IMR-90 (cell line): ENCODE measurements at regions of chr14 and their contacts with region 1.

Region 1: GRCh38 chr14:77457522-77458290 is at the starts of genes AHSA1 and VIPAS39:
- DNase-seq: peak; percentile 99
- ATAC-seq: peak; percentile 97
- H3K4me3 ChIP-seq: peak within 1 kb of the TSS; percentile 69
- H3K27ac ChIP-seq: peak within 1 kb of the TSS; percentile 92
- H3K4me1 ChIP-seq: peaks cover 3% of the 10 kb centered on the region
- H3K27me3 ChIP-seq: no peaks in the 10 kb centered on the region
- CTCF ChIP-seq: no peak
- POLR2A ChIP-seq: peak; percentile 88
- RAD21 ChIP-seq: no peak
- total RNA-seq, gene AHSA1: 152 and 166 TPM in 2 replicates
- total RNA-seq, gene VIPAS39: 32.2 and 43.0 TPM in 2 replicates

Region 2: GRCh38 chr14:77151918-77152588 is 305.7 kb before region 1 on chr14:
- CTCF ChIA-PET with region 1: no interaction called
- POLR2A ChIA-PET with region 1: no interaction called
- dilution Hi-C with region 1: no loop called
- in situ Hi-C with region 1: no loop called
- intact Hi-C with region 1: loop called (anchors 10 kb)
- DNase-seq: peak; percentile 28
- ATAC-seq: peak; percentile 89
- H3K4me3 ChIP-seq: no peak overlapping the region
- H3K27ac ChIP-seq: no peak overlapping the region
- H3K4me1 ChIP-seq: no peaks in the 10 kb centered on the region
- H3K27me3 ChIP-seq: peaks cover 28% of the 10 kb centered on the region
- CTCF ChIP-seq: peak; percentile 39
- POLR2A ChIP-seq: no peak
- RAD21 ChIP-seq: peak; percentile 47

Region 3: DNA sequence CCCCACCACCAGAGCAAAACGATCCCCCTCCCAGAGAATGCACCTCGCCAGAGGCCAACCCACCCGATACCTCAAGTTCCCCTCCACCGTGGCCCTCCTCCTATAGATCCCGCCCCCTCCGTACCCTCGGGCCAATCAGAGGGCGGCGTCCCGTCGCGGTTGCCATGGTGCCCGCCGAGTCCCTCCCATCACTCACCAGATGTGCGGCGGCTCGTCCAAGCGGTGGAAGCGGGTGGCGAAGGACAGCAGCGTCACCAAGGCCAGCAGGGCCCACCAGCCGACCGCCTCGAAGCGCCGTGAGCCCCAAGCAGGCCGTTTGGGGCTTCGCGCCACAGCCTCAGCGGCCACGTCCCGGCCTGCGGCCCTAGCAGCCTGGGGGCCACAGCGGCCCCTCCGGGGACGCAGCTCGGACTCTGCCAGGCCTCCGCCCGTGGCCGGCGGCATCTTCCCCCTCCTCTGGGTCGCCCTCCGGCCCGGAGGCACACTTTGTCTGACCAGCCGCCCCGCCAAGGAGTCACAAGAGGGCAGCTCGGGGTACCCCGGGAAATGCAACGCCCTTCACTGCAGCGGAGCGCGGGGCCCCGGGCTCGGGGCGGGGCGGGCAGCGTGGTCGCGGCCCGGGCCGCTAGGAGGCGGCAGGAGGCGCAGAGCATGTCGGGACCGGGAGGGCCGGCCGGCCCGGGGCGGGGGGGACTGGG is 137.3 kb before region 1 on chr14 and contains the start of gene POMT2:
- CTCF ChIA-PET with region 1: no interaction called
- POLR2A ChIA-PET with region 1: interaction called, 13 read pairs
- dilution Hi-C with region 1: no loop called
- in situ Hi-C with region 1: no loop called
- intact Hi-C with region 1: loop called (anchors 5 kb)
- DNase-seq: peak; percentile 79
- ATAC-seq: peak; percentile 64
- H3K4me3 ChIP-seq: peak within 1 kb of the TSS; percentile 84
- H3K27ac ChIP-seq: peak within 1 kb of the TSS; percentile 98
- H3K4me1 ChIP-seq: peaks cover 2% of the 10 kb centered on the region; the same call in 1 of the 2 replicates
- H3K27me3 ChIP-seq: no peaks in the 10 kb centered on the region
- CTCF ChIP-seq: peak; percentile 57
- POLR2A ChIP-seq: no peak
- RAD21 ChIP-seq: 0 out of 2 replicates have a peak, but pooled peaks have one; percentile 9
- total RNA-seq, gene POMT2: 5.8 and 6.5 TPM in 2 replicates

Region 4: GRCh38 chr14:77516126-77516525 is 58.4 kb after region 1 on chr14:
- CTCF ChIA-PET with region 1: no interaction called
- POLR2A ChIA-PET with region 1: no interaction called
- dilution Hi-C with region 1: no loop called
- in situ Hi-C with region 1: no loop called
- intact Hi-C with region 1: loop called (anchors 1 kb)
- DNase-seq: peak; percentile 16
- ATAC-seq: no peak
- H3K4me3 ChIP-seq: no peak overlapping the region
- H3K27ac ChIP-seq: no peak overlapping the region
- H3K4me1 ChIP-seq: no peaks in the 10 kb centered on the region
- H3K27me3 ChIP-seq: no peaks in the 10 kb centered on the region
- CTCF ChIP-seq: no peak
- POLR2A ChIP-seq: no peak
- RAD21 ChIP-seq: no peak

Region 5: DNA sequence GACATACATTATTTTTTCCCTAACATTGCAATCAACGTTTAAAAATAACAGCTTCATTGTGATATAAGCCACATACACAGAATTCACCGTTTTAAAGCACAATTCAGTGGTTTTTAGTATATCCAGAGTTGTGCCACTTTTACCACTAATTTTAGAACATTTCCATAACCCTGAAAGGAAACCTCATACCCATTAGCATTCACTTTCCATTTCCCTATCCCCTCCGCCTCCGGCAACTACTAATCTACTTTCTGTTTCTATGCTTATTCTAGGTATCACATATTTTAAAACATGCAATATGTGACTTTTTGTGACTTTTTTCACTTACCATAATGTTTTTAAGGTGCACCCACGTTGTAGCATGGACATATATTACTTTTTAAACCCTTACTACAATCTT is 96.5 kb after region 1 on chr14:
- CTCF ChIA-PET with region 1: interaction called, 4 read pairs
- POLR2A ChIA-PET with region 1: no interaction called
- dilution Hi-C with region 1: no loop called
- in situ Hi-C with region 1: loop called (anchors 5 kb)
- intact Hi-C with region 1: loop called (anchors 1 kb)
- DNase-seq: no peak
- ATAC-seq: no peak
- H3K4me3 ChIP-seq: no peak overlapping the region
- H3K27ac ChIP-seq: no peak overlapping the region
- H3K4me1 ChIP-seq: no peaks in the 10 kb centered on the region
- H3K27me3 ChIP-seq: no peaks in the 10 kb centered on the region
- CTCF ChIP-seq: no peak
- POLR2A ChIP-seq: no peak
- RAD21 ChIP-seq: no peak

Region 6: GRCh38 chr14:77707724-77708408 is 250.2 kb after region 1 on chr14 and contains the starts of genes ALKBH1 and SLIRP:
- CTCF ChIA-PET with region 1: no interaction called
- POLR2A ChIA-PET with region 1: no interaction called
- dilution Hi-C with region 1: no loop called
- in situ Hi-C with region 1: loop called (anchors 10 kb)
- intact Hi-C with region 1: loop called (anchors 1 kb)
- DNase-seq: peak; percentile 72
- ATAC-seq: peak; percentile 96
- H3K4me3 ChIP-seq: peak within 1 kb of the TSS; percentile 94
- H3K27ac ChIP-seq: peak within 1 kb of the TSS; percentile 76
- H3K4me1 ChIP-seq: no peaks in the 10 kb centered on the region; the same call in 1 of the 2 replicates
- H3K27me3 ChIP-seq: no peaks in the 10 kb centered on the region
- CTCF ChIP-seq: no peak
- POLR2A ChIP-seq: peak; percentile 84
- RAD21 ChIP-seq: no peak
- total RNA-seq, gene ALKBH1: 9.2 and 10.8 TPM in 2 replicates
- total RNA-seq, gene SLIRP: 226 and 309 TPM in 2 replicates